Common myeloid progenitor, CD34-positive (primary cell): ENCODE measurements at regions of chr7 and their contacts with region 1.

Region 1: DNA sequence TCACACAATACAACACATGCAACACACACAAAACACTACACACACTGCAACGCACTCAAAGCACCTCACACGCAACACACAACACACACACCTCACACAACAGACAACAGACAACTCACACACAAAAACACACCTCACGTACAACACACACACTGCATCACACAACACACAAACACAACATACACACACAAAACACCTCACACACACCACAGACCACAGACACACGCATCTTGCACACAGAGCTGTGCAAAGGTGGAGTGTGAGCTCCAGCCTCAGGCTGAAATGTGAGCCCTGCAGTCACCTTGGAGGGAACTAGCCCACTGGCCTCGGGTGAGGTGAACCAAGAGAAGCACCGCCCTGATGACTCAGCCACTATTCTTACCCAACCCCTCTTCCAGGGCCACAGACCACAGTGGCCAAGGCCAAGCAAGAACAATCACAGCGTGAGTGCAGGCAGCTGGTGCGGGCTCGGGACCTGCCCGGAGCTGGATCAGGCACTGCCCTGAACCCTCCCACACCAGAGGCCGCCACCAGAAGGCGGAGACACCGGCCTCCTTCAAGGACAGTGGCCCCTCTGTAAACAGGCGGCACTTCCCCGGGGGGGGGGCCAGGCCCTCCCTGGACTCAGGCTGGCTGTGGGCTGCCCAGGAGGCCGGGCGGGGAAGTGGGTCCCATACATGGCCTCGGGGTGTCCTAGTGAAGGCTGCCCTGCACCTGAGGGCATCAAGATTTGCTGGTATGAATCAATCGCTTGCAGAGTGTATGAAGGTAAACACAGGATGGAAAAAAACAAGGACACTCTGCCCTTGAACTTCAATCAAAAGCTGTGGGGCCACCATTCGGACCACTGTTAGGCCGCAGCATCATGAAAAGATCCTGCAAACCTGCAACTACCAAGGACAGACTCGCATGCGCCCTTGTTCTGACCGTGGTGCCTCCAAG is 106.7 kb downstream of the TNS3 start:
- DNase-seq: peak; percentile 90 to 99 (median 98)
- H3K4me3 ChIP-seq: peak overlapping the region in 1 of 7 experiments; percentile 27
- H3K27ac ChIP-seq: no peak overlapping the region
- H3K4me1 ChIP-seq: peaks cover 4 to 60% (median 49%) of the 10 kb centered on the region in 4 experiments
- H3K27me3 ChIP-seq: no peaks in the 10 kb centered on the region

Region 2: DNA sequence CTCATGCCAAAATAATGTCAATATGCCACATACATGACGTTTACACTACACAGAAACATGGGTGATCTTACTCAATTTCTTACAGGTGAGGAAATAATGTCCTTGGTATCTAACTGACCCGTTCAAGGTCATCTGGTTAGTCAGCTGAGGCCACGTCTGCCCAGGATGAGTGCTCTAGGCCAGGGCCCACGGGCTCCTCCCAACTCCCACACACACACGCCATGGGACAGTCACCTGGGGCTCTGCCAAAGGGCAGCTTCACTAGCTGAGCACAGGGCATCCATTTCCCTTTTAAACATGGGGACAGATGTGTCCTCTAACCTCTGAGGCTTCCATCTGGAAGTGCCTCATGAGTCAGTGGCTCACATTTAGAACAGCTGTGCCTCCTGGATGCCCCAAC is 17.2 kb before region 1 on chr7:
- CTCF ChIA-PET with region 1: interaction called, 10 read pairs
- POLR2A ChIA-PET with region 1: no interaction called
- DNase-seq: peak in 1 of 3 donors; percentile 23
- H3K4me3 ChIP-seq: no peak overlapping the region
- H3K27ac ChIP-seq: no peak overlapping the region
- H3K4me1 ChIP-seq: peaks cover 0 to 37% (median 23%) of the 10 kb centered on the region in 4 experiments
- H3K27me3 ChIP-seq: no peaks in the 10 kb centered on the region

Region 3: GRCh38 chr7:47497367-47498096 is 22.3 kb after region 1 on chr7:
- CTCF ChIA-PET with region 1: interaction called, 169 read pairs
- POLR2A ChIA-PET with region 1: no interaction called
- DNase-seq: peak in 2 of 3 donors; percentile 72 to 78
- H3K4me3 ChIP-seq: peak overlapping the region in 1 of 7 experiments; percentile 14
- H3K27ac ChIP-seq: peak overlapping the region in 1 of 2 experiments; percentile 66
- H3K4me1 ChIP-seq: peaks cover 10 to 98% (median 90%) of the 10 kb centered on the region in 4 experiments
- H3K27me3 ChIP-seq: no peaks in the 10 kb centered on the region